MCF 10A (cell line): ENCODE measurements at regions of chr5 and their contacts with region 1.

Region 1: GRCh38 chr5:59174248-59174844 is 591.5 kb downstream of the RAB3C start:
- DNase-seq: peak; percentile 73
- H3K4me3 Mint-ChIP-seq: no peak overlapping the region
- H3K27ac Mint-ChIP-seq: no peak overlapping the region
- H3K4me1 Mint-ChIP-seq: peaks cover 7% of the 10 kb centered on the region
- H3K27me3 Mint-ChIP-seq: no peaks in the 10 kb centered on the region
- CTCF ChIP-seq: peak; percentile 89

Region 2: GRCh38 chr5:58871648-58872242 is 302.6 kb before region 1 on chr5:
- CTCF ChIA-PET with region 1: interaction called, 9 read pairs
- POLR2A ChIA-PET with region 1: no interaction called
- intact Hi-C with region 1: loop called (anchors 1 kb)
- DNase-seq: peak; percentile 68
- H3K4me3 Mint-ChIP-seq: no peak overlapping the region
- H3K27ac Mint-ChIP-seq: no peak overlapping the region
- H3K4me1 Mint-ChIP-seq: no peaks in the 10 kb centered on the region
- H3K27me3 Mint-ChIP-seq: peaks cover 47% of the 10 kb centered on the region
- CTCF ChIP-seq: peak; percentile 36

Region 3: DNA sequence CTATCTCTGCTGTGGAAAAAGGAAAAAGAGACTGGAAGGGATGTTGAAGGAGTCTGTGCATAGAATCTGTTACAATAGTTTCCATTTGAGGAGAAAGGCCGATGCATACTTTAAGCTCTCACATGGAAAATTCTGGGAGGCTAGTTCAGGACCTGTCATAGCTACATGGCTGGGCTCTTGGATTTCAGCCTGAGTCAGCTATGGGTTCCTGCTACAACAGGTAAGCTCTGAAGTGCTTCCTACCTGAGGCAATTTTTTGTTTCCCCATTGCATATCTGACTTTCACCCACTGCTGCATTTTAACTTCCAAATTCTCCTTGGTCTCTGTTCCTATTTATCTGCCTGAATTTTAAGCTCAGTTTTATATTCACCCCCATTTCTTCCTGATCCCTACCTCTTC is 280.8 kb before region 1 on chr5:
- CTCF ChIA-PET with region 1: interaction called, 31 read pairs
- POLR2A ChIA-PET with region 1: interaction called, 6 read pairs
- intact Hi-C with region 1: loop called (anchors 1 kb)
- DNase-seq: no peak
- H3K4me3 Mint-ChIP-seq: no peak overlapping the region
- H3K27ac Mint-ChIP-seq: no peak overlapping the region
- H3K4me1 Mint-ChIP-seq: peaks cover 30% of the 10 kb centered on the region
- H3K27me3 Mint-ChIP-seq: no peaks in the 10 kb centered on the region
- CTCF ChIP-seq: no peak

Region 4: DNA sequence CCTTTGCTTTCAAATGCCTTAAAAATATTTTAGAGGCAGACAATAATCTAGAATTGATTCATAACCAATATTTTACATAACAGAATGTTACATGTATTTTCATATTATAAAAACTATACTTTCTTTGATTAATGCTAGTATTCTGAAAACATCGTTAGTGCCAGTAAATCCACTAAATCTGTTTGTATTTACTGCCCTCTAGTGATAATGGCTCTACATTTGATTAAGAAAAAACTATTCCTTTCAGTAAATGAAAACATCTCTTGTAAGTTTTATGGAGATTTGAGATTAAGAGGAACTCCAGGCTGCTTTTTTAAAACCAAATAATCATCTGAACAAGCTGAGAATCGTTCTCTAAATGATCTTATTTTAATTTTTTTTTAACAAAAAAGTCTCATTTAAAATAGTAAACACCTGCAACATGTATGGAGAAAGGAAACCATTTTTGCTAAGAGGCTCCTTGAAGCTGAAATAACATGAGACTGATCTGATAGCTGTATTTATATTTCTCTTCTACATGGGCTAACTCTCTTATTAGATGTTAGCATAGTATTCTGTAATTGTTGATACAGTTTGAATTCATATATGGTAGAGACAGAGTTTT is 166.8 kb before region 1 on chr5:
- CTCF ChIA-PET with region 1: interaction called, 18 read pairs
- POLR2A ChIA-PET with region 1: no interaction called
- intact Hi-C with region 1: no loop called
- DNase-seq: peak; percentile 17
- H3K4me3 Mint-ChIP-seq: no peak overlapping the region
- H3K27ac Mint-ChIP-seq: no peak overlapping the region
- H3K4me1 Mint-ChIP-seq: peaks cover 17% of the 10 kb centered on the region
- H3K27me3 Mint-ChIP-seq: no peaks in the 10 kb centered on the region
- CTCF ChIP-seq: peak; percentile 44

Region 5: GRCh38 chr5:59500014-59500413 is 325.7 kb after region 1 on chr5:
- CTCF ChIA-PET with region 1: no interaction called
- POLR2A ChIA-PET with region 1: no interaction called
- intact Hi-C with region 1: no loop called
- DNase-seq: no peak
- H3K4me3 Mint-ChIP-seq: no peak overlapping the region
- H3K27ac Mint-ChIP-seq: no peak overlapping the region
- H3K4me1 Mint-ChIP-seq: peaks cover 12% of the 10 kb centered on the region
- H3K27me3 Mint-ChIP-seq: no peaks in the 10 kb centered on the region
- CTCF ChIP-seq: no peak